HEK293 (cell line): ENCODE measurements at regions of chr5 and their contacts with region 1.

Region 1: GRCh38 chr5:134738133-134738962 is at the start of gene CAMLG:
- H3K4me3 ChIP-seq: peak within 1 kb of the TSS; percentile 84
- H3K27ac ChIP-seq: peak within 1 kb of the TSS; percentile 54
- H3K4me1 ChIP-seq: peaks cover 10% of the 10 kb centered on the region
- CTCF ChIP-seq: peak; percentile 97

Region 2: GRCh38 chr5:134758504-134759341 is 20.4 kb after region 1 on chr5 and contains the start of gene DDX46:
- CTCF ChIA-PET with region 1: interaction called, 15 read pairs
- POLR2A ChIA-PET with region 1: interaction called, 25 read pairs
- H3K4me3 ChIP-seq: peak within 1 kb of the TSS; percentile 97
- H3K27ac ChIP-seq: peak within 1 kb of the TSS; percentile 51; the same call in 1 of the 2 replicates
- H3K4me1 ChIP-seq: 0 out of 2 replicates have a peak, but pooled peaks cover 5% of the 10 kb centered on the region
- CTCF ChIP-seq: peak; percentile 99

Region 3: GRCh38 chr5:134784241-134784920 is 46.0 kb after region 1 on chr5:
- CTCF ChIA-PET with region 1: no interaction called
- POLR2A ChIA-PET with region 1: no interaction called
- H3K4me3 ChIP-seq: no peak overlapping the region
- H3K27ac ChIP-seq: no peak overlapping the region
- H3K4me1 ChIP-seq: no peaks in the 10 kb centered on the region
- CTCF ChIP-seq: no peak